ENCODE measurements at regions of chr1 and their contacts with region 1.

Region 1: DNA sequence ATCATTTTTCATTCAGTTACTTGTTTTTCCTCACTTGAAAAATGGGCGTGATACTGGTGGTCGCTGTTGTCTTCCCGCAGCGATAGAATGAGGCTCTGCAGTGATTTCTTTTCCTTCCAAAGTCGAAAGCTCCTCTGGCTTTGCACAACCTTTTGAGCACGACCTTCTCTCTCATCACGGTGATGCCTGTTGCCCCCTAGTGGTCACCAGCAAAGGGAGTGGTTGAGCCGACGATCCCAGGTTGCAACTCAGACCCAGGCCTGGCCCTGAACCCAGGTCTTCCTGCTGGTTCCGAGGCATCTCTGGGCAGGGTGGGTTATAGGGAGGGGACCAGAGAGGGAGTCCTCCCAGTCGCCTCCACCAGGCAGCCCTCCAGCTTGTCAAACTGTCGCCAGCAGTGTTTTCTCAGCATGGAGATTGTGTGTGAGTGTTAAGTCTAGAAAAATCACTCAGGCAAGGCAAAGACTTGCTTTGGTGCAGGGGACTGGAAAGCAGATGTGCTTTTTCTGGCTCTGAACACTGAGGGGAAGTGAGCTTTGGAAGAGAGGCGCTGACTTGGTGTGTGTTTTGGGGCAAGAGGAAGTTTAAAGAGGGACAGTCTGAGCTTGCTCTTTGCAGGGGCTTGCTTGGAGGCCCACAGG is 285.3 kb downstream of the CAMTA1 start:
- DNase-seq: peak; percentile 52
- ATAC-seq: peak; percentile 87 to 96
- H3K4me3 ChIP-seq: no peak overlapping the region
- H3K27ac ChIP-seq: peak overlapping the region; percentile 25 to 73; a peak in 5 of 6 replicates
- H3K4me1 ChIP-seq: no peaks in the 10 kb centered on the region
- CTCF ChIP-seq: peak; percentile 59
- EP300 ChIP-seq: no peak
- POLR2A ChIP-seq: no peak
- RAD21 ChIP-seq: peak; percentile 51 to 63; a peak in 4 of 5 replicates

Region 2: GRCh38 chr1:7084232-7084894 is 13.9 kb after region 1 on chr1:
- CTCF ChIA-PET with region 1: interaction called, 30 read pairs
- POLR2A ChIA-PET with region 1: no interaction called
- DNase-seq: no peak
- ATAC-seq: no peak
- H3K4me3 ChIP-seq: no peak overlapping the region
- H3K27ac ChIP-seq: no peak overlapping the region
- H3K4me1 ChIP-seq: no peaks in the 10 kb centered on the region
- CTCF ChIP-seq: no peak
- EP300 ChIP-seq: no peak
- POLR2A ChIP-seq: no peak
- RAD21 ChIP-seq: no peak